Posterior cingulate gyrus (tissue), 11 donors: ENCODE measurements at regions of chr3 and their contacts with region 1.

Region 1: DNA sequence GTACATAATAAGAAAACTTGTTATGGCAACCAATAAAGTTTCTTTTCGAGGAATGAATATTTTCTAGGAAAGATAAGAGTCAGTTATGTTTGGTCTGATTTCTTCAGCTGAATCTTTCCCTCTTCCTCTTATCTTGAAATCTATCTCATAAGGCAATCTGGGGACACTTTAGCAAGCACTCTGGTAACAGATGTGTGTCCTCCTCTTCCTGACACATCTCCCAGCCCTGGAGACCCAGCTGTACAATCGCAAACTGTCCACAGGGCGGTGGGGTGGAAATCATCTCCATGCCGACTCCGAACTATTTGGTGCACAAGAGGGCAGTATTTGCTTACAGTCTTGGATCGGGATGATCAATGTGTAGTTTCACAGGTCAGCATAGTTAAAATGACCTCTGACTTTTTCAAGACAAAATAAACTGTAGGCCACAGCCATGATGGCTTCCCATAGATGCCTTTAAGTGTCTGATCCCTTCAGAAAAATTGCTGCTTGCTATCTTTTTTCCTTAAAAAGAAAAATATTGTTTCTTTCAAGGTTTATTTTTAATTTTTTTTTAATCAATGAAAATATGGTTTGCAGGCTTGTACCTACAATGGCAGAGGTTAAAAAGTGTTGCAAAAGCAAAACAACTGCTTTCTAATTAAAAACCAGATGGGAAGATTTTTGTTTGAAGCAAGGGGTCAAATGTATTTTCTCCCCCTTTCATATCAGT is 17.7 kb downstream of the EEFSEC start:
- DNase-seq: peak in 7 of 10 donors; percentile 36 to 92 (median 60)

Region 2: DNA sequence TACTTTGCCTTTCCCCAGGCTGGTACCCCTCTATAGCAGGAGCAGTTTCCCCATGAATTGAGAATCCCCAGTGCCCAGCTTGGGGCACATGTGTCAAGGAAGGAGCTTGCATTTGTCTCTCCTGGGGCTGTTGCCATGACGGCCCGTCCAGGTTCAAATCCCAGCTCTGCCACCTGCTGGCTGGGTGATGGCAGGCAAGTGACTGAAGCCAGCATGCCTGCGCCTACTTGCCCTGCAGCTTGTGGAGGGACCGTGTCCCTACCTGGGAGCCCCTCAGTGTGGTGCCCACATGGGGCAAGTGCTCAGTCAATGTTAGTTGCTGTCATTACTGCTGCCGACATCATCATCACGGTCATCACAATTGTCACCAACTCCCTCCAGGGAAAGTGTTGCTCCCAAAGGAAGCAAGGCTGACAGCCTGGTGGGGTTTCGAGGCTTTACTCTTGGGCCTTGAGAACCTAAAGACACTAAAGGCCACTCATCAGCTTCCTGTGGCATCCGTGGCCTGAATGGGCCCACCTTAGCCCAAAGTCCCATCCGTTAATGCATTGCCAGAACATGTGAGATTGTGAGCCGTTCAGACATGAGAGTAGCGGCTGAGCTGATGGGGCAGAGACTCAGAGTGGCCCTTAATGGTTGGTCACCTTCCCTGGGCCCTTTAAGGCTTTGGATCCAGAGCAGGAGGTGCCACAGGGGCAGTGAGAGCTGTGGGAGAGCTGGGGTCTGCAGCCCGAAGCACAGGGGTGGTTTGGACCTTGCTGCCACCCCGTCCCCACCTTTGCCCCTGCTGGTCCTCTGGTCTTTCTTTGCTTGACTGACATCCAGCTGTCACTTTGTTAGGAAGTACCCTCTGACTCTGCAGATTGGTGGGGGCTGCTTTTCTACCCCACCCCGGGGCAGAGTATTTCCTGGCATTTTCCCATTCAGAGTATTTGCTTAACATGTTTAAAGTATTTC is 151.4 kb after region 1 on chr3:
- intact Hi-C with region 1: loop called (anchors 5 kb)
- DNase-seq: peak in 8 of 10 donors; percentile 30 to 87 (median 52)

Region 3: GRCh38 chr3:128584412-128585020 is 413.6 kb after region 1 on chr3:
- intact Hi-C with region 1: loop called (anchors 5 kb)
- DNase-seq: peak; percentile 20 to 96 (median 77)